Activated T-helper 2 cell treated with anti-CD3 and anti-CD28 coated beads, Interferon-gamma antibody, Interleukin-2, Interleukin-4, amounts not matched to agents 10 μg/mL and 5 μg/mL and 100 μg/mL, durations not matched to agents 14 hours and 24 hours and 36 hours (primary cell): ENCODE measurements at regions of chr12 and their contacts with region 1.

Region 1: DNA sequence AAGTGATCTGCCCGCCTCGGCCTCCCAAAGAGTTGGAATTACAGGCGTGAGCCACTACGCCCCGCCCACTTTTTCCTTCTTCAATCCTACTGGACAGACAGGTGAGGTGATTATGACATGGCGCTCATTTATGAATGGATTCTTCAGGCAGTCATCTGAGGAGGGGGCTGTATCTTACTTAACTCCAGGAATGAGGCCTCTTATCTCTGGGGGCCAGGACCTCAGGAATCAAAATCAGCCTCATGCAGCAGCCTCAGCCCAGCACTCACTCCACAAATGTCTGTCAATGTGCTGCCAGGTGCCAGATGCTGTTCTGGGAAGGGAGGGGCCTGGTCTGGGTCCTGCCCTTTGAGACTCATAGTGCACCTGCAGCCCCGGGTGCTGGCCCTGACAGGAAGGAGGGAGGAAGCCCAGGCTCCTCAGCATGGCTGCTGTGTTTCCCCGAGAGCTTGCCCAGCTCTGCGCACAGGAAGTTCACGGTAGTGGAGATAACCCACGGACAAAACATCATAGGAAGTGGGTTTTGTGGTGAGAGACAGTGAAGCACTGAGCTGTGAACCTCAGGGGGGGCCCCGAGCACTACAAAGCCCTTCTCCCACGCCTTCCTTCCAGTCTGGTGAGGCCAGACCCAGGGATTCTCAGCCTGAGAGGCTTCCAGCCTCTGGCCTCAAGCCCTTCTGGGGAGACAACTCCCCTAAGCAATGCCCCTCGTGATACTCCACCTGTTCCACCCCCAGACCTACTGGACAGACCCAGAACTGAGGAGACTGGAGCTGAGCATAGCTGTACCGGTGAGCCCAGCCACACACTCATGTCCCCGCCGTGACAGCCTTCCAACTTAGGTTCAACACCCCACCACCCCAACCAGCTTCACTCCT is 22.3 kb downstream of the GALNT6 start:
- DNase-seq: peak; percentile 87
- H3K4me3 Mint-ChIP-seq: peak overlapping the region; percentile 27
- H3K27ac Mint-ChIP-seq: peak overlapping the region; percentile 49
- H3K4me1 Mint-ChIP-seq: peaks cover 51% of the 10 kb centered on the region
- H3K27me3 Mint-ChIP-seq: no peaks in the 10 kb centered on the region

Region 2: DNA sequence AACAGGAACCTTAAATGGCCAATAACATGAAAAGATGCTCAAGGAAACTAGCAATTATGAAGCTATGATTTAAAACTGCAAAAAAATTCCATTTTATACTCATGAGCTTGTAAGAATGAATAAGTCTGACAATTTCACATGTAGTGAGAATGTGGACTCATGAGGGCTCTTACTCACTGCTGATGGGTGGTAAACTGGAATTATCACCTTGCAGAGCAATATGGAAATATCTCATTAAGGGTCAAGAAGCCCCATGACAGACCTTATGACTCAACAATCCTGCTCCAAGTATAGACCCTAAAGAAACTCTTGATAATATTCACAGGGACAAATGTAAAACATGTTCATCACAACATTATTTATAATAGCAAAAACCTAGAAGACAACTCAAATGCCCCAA is 75.2 kb before region 1 on chr12:
- intact Hi-C with region 1: no loop called
- DNase-seq: no peak
- H3K4me3 Mint-ChIP-seq: no peak overlapping the region
- H3K27ac Mint-ChIP-seq: peak overlapping the region; percentile 40
- H3K4me1 Mint-ChIP-seq: peaks cover 7% of the 10 kb centered on the region
- H3K27me3 Mint-ChIP-seq: no peaks in the 10 kb centered on the region

Region 3: DNA sequence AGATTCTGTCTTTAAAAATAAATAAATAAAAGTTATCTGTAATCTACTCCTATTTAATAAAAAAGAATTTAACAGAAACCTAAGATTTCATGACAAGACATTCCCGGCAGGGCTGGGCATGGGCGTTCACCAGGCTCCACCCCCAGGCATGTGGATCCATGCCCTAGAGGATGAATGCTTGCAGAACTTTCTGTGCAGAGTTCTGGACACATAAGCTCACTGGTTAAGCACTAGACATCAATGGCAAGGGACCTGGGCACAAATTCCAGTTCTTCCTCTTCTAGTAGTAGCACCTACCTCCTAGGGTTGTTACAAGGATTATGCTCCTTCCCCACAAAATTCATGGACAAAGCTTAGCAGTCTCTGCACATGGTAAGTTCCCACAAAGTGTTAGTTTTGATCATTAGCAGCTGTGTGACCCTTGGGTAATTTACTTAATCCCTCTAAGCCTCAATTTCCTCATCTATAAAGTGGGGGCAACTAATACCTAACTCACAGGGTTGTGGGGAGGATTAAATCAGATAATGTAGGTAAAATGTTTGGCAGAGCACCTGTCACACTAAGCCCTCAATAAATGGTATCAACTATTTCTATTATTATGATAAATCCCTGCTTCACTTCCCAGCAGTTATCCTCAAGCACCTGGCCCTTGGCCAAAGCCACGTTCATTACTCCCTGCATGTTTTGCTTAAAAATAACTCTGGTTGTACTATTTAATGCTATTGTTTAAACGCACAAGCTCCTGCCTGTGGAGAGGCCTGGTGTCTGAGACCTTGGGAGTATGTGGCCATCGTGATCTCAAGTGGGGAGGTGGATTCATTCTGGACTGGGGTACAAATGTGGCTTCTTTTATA is 12.6 kb after region 1 on chr12:
- intact Hi-C with region 1: no loop called
- DNase-seq: no peak
- H3K4me3 Mint-ChIP-seq: no peak overlapping the region
- H3K27ac Mint-ChIP-seq: no peak overlapping the region
- H3K4me1 Mint-ChIP-seq: peaks cover 32% of the 10 kb centered on the region
- H3K27me3 Mint-ChIP-seq: no peaks in the 10 kb centered on the region

Region 4: DNA sequence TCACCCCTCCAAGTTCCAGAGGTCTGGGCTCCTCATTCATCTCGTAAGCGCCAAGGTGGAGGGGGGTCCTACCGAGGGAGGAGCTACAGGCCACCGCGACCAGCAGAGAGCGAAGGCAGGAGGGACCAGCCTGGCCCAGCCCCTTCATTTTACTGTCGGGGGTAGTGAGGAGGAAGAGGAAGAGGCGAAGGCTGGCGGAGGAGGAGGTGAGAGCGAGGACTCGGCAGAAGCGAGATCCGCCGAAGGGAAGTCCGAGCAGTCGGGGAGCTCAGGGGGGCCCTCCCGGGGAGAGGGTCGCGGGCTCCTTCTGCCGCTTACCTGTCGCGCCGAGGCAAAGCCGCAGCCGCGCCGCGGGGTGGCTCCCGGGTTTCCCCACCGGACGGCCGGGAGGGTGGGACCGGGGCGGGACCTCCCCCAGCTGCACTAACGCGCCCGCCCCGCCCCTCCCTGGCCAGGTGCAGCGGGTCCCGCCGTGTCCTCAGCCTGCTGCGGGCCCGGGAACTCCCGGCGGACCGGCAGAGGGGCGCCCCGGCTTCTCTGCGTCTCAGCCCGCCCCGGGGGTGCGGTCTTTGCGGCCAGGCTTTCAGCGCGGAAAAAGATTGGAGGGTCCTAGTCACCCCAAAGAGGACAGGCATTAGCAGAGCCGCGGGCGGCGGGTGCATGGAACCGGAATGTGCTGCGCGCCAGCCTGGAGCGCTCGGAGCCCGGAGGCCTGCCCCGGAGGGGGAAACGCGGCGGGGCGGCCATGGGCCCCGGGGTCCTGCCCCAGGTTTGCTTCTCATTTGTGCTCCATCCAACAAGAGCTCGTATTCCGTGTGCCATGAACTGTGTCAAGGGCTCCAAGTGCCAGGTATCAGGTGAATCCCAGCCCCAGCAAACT is 22.6 kb after region 1 on chr12 and contains the start of gene GALNT6:
- intact Hi-C with region 1: loop called (anchors 1 kb)
- DNase-seq: peak; percentile 60
- H3K4me3 Mint-ChIP-seq: peak within 1 kb of the TSS; percentile 91
- H3K27ac Mint-ChIP-seq: peak within 1 kb of the TSS; percentile 80
- H3K4me1 Mint-ChIP-seq: peaks cover 74% of the 10 kb centered on the region
- H3K27me3 Mint-ChIP-seq: no peaks in the 10 kb centered on the region
- total RNA-seq, gene GALNT6: 19.9 and 22.7 TPM in 2 replicates

Region 5: DNA sequence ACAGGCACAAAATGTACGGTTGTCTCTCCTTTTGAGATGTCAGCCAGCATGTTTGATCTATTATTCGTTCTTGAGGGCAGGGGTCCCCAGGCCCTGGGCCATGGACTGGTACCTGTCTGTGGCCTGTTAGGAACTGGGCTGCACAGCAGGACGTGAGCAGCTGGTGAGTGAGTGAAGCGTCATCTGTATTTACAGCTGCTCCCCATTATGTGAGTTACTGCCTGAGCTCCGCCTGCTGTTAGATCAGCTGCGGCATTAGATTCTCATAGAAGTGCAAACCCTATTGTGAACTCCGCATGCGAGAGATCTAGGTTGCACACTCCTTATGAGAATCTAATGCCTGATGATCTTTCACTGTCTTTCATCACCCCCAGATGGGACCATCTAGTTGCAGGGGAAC is 180.8 kb after region 1 on chr12:
- intact Hi-C with region 1: no loop called
- DNase-seq: no peak
- H3K4me3 Mint-ChIP-seq: no peak overlapping the region
- H3K27ac Mint-ChIP-seq: no peak overlapping the region
- H3K4me1 Mint-ChIP-seq: no peaks in the 10 kb centered on the region
- H3K27me3 Mint-ChIP-seq: peaks cover 22% of the 10 kb centered on the region